MCF 10A (cell line): ENCODE measurements at regions of chrX and their contacts with region 1.

Region 1: GRCh38 chrX:10254741-10255140 is 98.0 kb downstream of the CLCN4 start:
- DNase-seq: peak; percentile 26
- H3K4me3 Mint-ChIP-seq: no peak overlapping the region
- H3K27ac Mint-ChIP-seq: no peak overlapping the region
- H3K4me1 Mint-ChIP-seq: no peaks in the 10 kb centered on the region
- H3K27me3 Mint-ChIP-seq: no peaks in the 10 kb centered on the region
- CTCF ChIP-seq: peak; percentile 35

Region 2: GRCh38 chrX:9656277-9656676 is 598.5 kb before region 1 on chrX:
- CTCF ChIA-PET with region 1: no interaction called
- POLR2A ChIA-PET with region 1: no interaction called
- intact Hi-C with region 1: no loop called
- DNase-seq: no peak
- H3K4me3 Mint-ChIP-seq: no peak overlapping the region
- H3K27ac Mint-ChIP-seq: no peak overlapping the region
- H3K4me1 Mint-ChIP-seq: no peaks in the 10 kb centered on the region
- H3K27me3 Mint-ChIP-seq: no peaks in the 10 kb centered on the region
- CTCF ChIP-seq: no peak

Region 3: DNA sequence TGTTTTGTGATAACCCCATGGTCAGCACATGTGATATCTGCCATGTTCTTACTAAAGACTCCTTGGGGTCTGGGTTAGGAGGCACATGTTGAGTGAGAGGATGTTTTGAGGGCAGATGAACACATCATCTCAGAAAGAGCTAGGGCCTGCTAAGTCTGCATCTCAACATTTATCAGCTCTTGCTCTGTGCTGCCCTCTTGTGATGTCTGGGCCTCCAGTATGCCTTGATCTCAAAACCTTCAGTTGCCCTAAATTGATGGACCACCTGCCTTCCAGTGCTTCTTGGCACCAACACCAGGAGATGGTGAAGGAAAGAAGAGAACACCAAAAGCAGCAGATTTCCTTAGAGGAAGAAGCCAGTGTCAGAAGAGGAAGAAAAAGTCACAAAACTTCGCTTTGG is 343.1 kb after region 1 on chrX:
- CTCF ChIA-PET with region 1: interaction called, 9 read pairs
- POLR2A ChIA-PET with region 1: no interaction called
- intact Hi-C with region 1: loop called (anchors 1 kb)
- DNase-seq: peak; percentile 61
- H3K4me3 Mint-ChIP-seq: no peak overlapping the region
- H3K27ac Mint-ChIP-seq: no peak overlapping the region
- H3K4me1 Mint-ChIP-seq: no peaks in the 10 kb centered on the region
- H3K27me3 Mint-ChIP-seq: no peaks in the 10 kb centered on the region
- CTCF ChIP-seq: peak; percentile 71

Region 4: DNA sequence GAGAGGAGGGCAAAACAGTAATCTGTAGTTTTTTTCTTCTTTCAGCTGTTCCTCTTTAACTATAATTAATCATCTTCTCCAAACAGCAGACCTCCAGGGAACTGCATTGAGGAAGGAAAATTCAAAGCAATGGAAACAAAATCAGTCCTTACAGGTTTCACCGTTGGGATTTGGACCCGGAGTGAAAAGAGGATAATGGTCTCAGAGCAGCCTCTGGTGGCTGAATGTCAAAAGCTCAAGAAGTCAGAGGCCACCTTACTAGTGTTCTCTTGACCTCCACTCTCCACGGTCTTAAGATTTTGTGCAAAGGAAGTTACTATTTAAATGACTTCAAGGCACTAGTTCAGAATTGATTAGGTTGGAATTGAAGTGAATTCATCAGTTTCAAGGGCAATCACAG is 381.6 kb after region 1 on chrX:
- CTCF ChIA-PET with region 1: interaction called, 3 read pairs
- POLR2A ChIA-PET with region 1: no interaction called
- intact Hi-C with region 1: loop called (anchors 1 kb)
- DNase-seq: peak; percentile 72
- H3K4me3 Mint-ChIP-seq: peak overlapping the region; percentile 52
- H3K27ac Mint-ChIP-seq: no peak overlapping the region
- H3K4me1 Mint-ChIP-seq: peaks cover 33% of the 10 kb centered on the region
- H3K27me3 Mint-ChIP-seq: peaks cover 20% of the 10 kb centered on the region
- CTCF ChIP-seq: peak; percentile 79